ENCODE measurements at regions of chr21 and their contacts with region 1.

Region 1: DNA sequence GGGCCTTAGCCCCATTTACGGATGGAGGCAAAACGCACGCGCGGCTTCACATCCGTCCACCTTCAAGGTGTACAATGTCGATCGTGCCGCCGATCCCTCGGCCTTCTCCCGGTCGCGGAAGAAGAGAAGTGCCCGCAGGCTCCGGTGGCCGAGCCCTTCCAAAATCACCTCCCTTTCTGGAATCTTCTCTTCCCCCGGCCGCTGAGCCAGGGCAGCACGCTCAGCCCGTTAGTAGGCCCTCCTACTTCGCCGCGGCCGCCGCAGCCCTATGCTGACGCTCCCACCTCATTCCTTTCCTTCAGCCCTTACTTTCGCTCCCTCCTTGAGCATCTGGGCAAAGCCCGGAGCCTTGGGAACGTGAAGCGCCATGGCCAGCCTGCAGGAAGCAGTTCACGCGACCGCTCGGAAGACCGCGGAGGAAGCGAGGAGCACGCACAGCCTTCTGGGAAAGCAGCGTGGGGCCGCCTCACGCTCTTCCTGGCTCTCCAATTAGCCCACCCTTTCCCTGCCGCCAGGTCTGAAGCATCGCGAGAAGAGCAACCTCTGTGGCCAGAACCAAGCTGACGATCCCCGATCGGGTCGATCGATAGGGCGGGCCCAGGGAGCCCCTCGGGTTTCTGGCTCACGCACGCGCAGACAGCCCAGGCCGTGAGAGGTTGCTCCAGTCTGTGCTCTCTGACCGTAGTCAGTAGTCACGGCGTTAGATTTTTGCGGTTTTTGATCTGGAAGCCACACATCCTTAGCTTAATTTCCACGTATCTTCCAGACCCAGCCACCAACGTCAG is at the start of gene CCT8:
- DNase-seq: peak; percentile 97 to 100 (median 99)
- H3K4me3 ChIP-seq: peak within 1 kb of the TSS; percentile 63 to 97
- H3K4me3 Mint-ChIP-seq: peak within 1 kb of the TSS; percentile 99 to 100 (median 100)
- H3K27ac ChIP-seq: peak within 1 kb of the TSS; percentile 88
- H3K27ac Mint-ChIP-seq: peak within 1 kb of the TSS; percentile 96 to 100 (median 99)
- H3K4me1 ChIP-seq: peaks cover 38% of the 10 kb centered on the region
- H3K4me1 Mint-ChIP-seq: peaks cover 24 to 63% (median 44%) of the 10 kb centered on the region in 4 donors
- H3K27me3 ChIP-seq: no peaks in the 10 kb centered on the region
- H3K27me3 Mint-ChIP-seq: no peaks in the 10 kb centered on the region
- total RNA-seq, gene CCT8: 109 to 114 TPM

Region 2: GRCh38 chr21:28992526-28993292 is 80.7 kb before region 1 on chr21 and contains the start of gene LTN1:
- CTCF ChIA-PET with region 1: no interaction called
- POLR2A ChIA-PET with region 1: interaction called, 27 read pairs
- intact Hi-C with region 1: loop called (anchors 1 kb)
- DNase-seq: peak; percentile 98 to 99 (median 99)
- H3K4me3 ChIP-seq: peak within 1 kb of the TSS; percentile 87 to 98
- H3K4me3 Mint-ChIP-seq: peak within 1 kb of the TSS; percentile 90 to 98 (median 96)
- H3K27ac ChIP-seq: peak within 1 kb of the TSS; percentile 82
- H3K27ac Mint-ChIP-seq: peak within 1 kb of the TSS; percentile 85 to 100 (median 99)
- H3K4me1 ChIP-seq: peaks cover 31% of the 10 kb centered on the region
- H3K4me1 Mint-ChIP-seq: peaks cover 24 to 54% (median 36%) of the 10 kb centered on the region in 4 donors
- H3K27me3 ChIP-seq: no peaks in the 10 kb centered on the region
- H3K27me3 Mint-ChIP-seq: no peaks in the 10 kb centered on the region
- total RNA-seq, gene LTN1: 34.6 to 39.5 TPM

Region 3: DNA sequence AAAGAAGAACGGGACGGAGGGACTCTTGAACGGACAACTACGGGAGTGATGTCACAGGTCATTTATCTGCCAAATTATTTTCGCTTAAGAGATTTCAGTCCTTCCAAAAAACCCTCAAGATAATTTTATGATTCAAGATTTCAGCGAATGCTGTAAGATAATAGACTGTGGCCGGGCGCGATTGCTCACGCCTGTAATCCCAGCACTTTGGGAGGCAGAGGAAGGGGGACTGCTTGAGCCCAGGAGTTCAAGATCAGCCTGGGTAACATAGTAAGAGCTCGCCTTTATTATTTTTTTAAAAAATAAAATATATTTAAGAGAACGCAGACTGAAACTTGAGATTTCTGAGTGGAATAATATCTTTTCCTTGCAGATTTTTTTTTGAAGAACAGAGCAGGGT is 54.9 kb before region 1 on chr21:
- CTCF ChIA-PET with region 1: interaction called, 3 read pairs
- POLR2A ChIA-PET with region 1: interaction called, 70 read pairs
- intact Hi-C with region 1: no loop called
- DNase-seq: no peak
- H3K4me3 ChIP-seq: peak overlapping the region; percentile 68 to 93
- H3K4me3 Mint-ChIP-seq: peak overlapping the region; percentile 82 to 94 (median 92)
- H3K27ac ChIP-seq: peak overlapping the region; percentile 92
- H3K27ac Mint-ChIP-seq: peak overlapping the region; percentile 78 to 99 (median 96)
- H3K4me1 ChIP-seq: peaks cover 39% of the 10 kb centered on the region
- H3K4me1 Mint-ChIP-seq: peaks cover 19 to 52% (median 38%) of the 10 kb centered on the region in 4 donors
- H3K27me3 ChIP-seq: no peaks in the 10 kb centered on the region
- H3K27me3 Mint-ChIP-seq: no peaks in the 10 kb centered on the region

Region 4: DNA sequence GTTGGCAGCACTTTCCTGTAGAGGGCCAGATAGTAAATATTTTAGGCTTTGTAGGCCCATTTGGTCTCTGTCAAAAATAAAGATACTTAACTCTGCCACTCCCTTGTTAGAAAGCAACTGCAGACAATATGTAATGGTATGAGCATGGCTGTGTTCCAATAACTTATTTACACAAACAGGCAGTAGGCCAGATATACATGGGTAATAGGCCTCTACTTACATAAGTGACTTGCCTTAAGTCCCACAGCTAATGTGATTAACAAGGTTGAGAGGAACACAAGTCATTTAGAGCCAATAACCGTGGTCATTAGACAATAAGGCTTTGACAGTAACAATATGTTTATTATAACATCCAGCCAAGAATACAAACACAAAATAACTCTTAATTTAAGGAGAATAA is 17.4 kb before region 1 on chr21:
- CTCF ChIA-PET with region 1: interaction called, 3 read pairs
- POLR2A ChIA-PET with region 1: interaction called, 6 read pairs
- intact Hi-C with region 1: loop called (anchors 2 kb)
- DNase-seq: no peak
- H3K4me3 ChIP-seq: no peak overlapping the region
- H3K4me3 Mint-ChIP-seq: no peak overlapping the region
- H3K27ac ChIP-seq: no peak overlapping the region
- H3K27ac Mint-ChIP-seq: peak overlapping the region in 2 of 7 donors; percentile 43 to 53
- H3K4me1 ChIP-seq: no peaks in the 10 kb centered on the region
- H3K4me1 Mint-ChIP-seq: no peaks in the 10 kb centered on the region
- H3K27me3 ChIP-seq: no peaks in the 10 kb centered on the region
- H3K27me3 Mint-ChIP-seq: no peaks in the 10 kb centered on the region

Region 5: DNA sequence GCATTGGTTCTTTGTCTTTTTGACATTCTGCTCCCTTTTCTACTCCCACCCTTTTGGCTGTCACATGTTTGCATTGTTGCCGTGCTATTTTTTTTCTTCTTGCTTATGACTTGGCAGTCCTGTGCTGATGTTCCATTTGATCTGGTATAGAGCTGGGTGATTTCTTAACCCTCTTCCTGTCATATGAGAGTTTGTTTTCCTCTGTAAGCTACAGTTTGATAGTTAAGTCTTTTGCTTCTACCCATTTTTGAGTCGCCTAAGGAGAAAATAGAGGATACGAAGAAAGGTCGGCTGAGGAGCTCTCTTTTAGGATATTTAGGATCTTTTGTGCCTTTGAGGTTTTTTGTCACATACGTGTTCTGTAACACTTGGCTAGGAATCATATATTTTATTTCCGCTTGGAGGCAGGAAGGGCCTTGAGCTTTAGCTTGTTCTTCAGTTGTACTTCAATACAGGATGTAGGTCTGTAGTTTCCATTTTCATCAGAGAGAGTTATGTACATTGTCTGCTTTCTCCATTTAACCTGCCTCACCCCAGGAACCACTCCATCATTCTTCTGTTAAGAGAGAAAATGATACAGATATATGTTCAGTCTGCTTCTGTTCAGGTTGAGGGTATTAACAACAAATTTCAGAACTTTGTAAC is 376.0 kb after region 1 on chr21:
- CTCF ChIA-PET with region 1: no interaction called
- POLR2A ChIA-PET with region 1: interaction called, 16 read pairs
- intact Hi-C with region 1: loop called (anchors 5 kb)
- DNase-seq: peak; percentile 41 to 86 (median 80)
- H3K4me3 ChIP-seq: no peak overlapping the region
- H3K4me3 Mint-ChIP-seq: peak overlapping the region; percentile 22 to 78 (median 64)
- H3K27ac ChIP-seq: peak overlapping the region; percentile 41
- H3K27ac Mint-ChIP-seq: peak overlapping the region; percentile 89 to 95 (median 93)
- H3K4me1 ChIP-seq: peaks cover 24% of the 10 kb centered on the region
- H3K4me1 Mint-ChIP-seq: peaks cover 16 to 40% (median 20%) of the 10 kb centered on the region in 4 donors
- H3K27me3 ChIP-seq: no peaks in the 10 kb centered on the region
- H3K27me3 Mint-ChIP-seq: no peaks in the 10 kb centered on the region

Measured in CD4-positive, alpha-beta memory T cell (primary cell).